ENCODE measurements at regions of chr11 and their contacts with region 1.

Region 1: GRCh38 chr11:33329705-33330329 is 72.6 kb downstream of the HIPK3 start:
- DNase-seq: no peak
- H3K4me3 ChIP-seq: no peak overlapping the region
- H3K27ac ChIP-seq: no peak overlapping the region
- H3K4me1 ChIP-seq: peaks cover 54 to 70% (median 60%) of the 10 kb centered on the region in 4 donors
- H3K27me3 ChIP-seq: no peaks in the 10 kb centered on the region
- CTCF ChIP-seq: peak; percentile 57 to 66 (median 63)
- EP300 ChIP-seq: no peak
- POLR2A ChIP-seq: no peak

Region 2: DNA sequence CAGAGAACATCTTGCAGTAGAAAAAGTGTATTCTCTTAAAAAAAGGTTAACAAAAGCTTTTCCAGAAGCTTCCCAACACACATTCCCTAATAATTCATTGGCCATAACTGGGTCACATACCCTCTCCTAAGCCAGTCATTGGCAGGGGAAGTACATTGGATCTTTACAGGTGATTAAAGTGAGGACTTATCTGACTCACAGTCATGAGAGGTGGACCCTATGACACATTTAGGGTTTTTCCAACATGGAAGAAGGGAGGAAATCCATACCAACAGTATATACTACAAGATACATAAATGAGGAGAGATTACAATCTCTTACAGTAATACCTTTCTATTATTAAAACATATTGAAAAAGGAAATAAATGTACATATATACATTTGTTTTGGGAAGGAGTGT is 607.6 kb before region 1 on chr11:
- intact Hi-C with region 1: no loop called
- DNase-seq: no peak
- H3K4me3 ChIP-seq: no peak overlapping the region
- H3K27ac ChIP-seq: no peak overlapping the region
- H3K4me1 ChIP-seq: no peaks in the 10 kb centered on the region
- H3K27me3 ChIP-seq: no peaks in the 10 kb centered on the region
- CTCF ChIP-seq: no peak
- EP300 ChIP-seq: no peak
- POLR2A ChIP-seq: no peak

Region 3: GRCh38 chr11:33257897-33258630 is 71.8 kb before region 1 on chr11:
- intact Hi-C with region 1: loop called (anchors 5 kb)
- DNase-seq: peak; percentile 97
- H3K4me3 ChIP-seq: peak overlapping the region; percentile 81 to 99 (median 90)
- H3K27ac ChIP-seq: peak overlapping the region; percentile 96 to 100 (median 100)
- H3K4me1 ChIP-seq: peaks cover 28 to 47% (median 45%) of the 10 kb centered on the region in 4 donors
- H3K27me3 ChIP-seq: no peaks in the 10 kb centered on the region
- CTCF ChIP-seq: peak; percentile 28 to 48 (median 47)
- EP300 ChIP-seq: no peak
- POLR2A ChIP-seq: peak; percentile 74

Region 4: GRCh38 chr11:33475993-33476392 is 146.2 kb after region 1 on chr11:
- intact Hi-C with region 1: no loop called
- DNase-seq: no peak
- H3K4me3 ChIP-seq: no peak overlapping the region
- H3K27ac ChIP-seq: no peak overlapping the region
- H3K4me1 ChIP-seq: no peaks in the 10 kb centered on the region
- H3K27me3 ChIP-seq: peaks cover 0 to 14% (median 0%) of the 10 kb centered on the region in 4 donors
- CTCF ChIP-seq: no peak
- EP300 ChIP-seq: no peak
- POLR2A ChIP-seq: no peak

Region 5: GRCh38 chr11:33819278-33819677 is 489.5 kb after region 1 on chr11:
- intact Hi-C with region 1: no loop called
- DNase-seq: no peak
- H3K4me3 ChIP-seq: no peak overlapping the region
- H3K27ac ChIP-seq: no peak overlapping the region
- H3K4me1 ChIP-seq: no peaks in the 10 kb centered on the region
- H3K27me3 ChIP-seq: peaks cover 0 to 50% (median 0%) of the 10 kb centered on the region in 4 donors
- CTCF ChIP-seq: no peak
- EP300 ChIP-seq: no peak
- POLR2A ChIP-seq: no peak